GM10248 (cell line): ENCODE measurements at regions of chr3 and their contacts with region 1.

Region 1: DNA sequence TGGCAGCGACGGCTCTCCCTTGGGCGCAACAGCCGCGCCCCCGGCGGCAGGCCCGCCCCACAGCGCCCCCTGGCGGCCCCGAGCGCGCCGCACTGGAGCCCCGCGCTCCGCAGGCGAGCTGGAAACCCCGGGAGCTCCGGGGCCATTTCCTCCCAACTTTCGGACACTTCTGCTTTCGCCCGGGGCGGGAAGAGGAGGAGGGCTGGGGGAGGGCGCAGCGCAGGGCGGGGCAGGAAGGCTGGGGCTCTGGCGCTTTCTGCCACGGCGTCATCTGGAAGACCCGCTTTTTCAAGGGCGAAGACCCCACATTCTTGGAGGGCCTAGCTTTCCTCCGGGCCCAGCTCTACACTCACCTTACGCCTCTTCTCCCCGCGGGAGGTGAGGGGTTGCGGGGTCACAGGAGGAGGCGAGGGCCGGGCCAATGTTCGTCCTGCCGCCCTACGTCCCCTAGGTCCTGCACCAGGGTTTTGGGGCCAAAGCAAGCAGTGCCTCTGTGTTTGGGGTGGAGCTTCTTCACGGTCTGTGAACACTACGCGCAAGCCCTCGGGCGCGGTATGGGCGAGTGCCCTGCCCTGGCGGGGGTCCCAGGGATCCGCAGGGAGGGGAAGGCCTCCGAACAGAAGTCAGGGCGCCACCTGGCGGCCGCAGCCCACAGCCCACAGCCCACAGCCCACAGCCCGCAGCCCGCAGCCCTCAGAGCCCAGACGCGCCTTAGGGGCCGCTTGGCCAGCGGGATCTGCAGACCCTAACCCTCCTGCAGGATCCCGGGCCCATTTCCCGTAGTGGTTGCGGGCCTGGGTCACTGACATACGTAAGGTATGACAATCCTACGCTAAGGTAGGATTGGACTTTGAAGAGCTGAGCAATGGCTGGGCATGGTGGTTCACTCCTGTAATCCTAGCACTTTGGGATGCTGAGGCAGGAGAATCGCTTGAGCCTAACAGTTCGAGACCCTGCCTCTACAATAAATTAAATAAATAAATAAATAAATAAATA is 31.1 kb downstream of the FOXL2 start:
- DNase-seq: peak; percentile 90
- CTCF ChIP-seq: peak; percentile 91

Region 2: DNA sequence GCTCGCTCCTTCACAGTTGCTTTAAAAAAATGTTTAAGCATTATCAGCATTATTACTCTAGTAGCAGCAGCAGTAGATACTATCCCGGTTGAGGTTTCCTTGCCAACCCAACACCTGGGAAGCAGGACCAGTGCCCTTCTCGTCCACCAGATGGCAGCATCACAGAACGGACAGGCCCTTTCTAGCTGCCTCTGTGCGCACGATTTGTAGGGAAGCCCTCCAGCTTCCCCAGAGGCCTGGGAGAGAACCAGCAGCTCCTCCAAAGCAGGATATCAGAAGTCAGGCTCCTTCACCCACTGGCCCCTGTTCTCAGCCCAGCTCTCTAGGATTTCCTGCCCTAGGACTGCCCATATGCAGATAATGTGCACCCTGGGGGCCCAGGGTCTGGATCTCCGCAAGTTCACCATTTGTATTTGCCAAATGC is 498.2 kb before region 1 on chr3:
- CTCF ChIA-PET with region 1: interaction called, 81 read pairs
- POLR2A ChIA-PET with region 1: no interaction called
- DNase-seq: peak; percentile 80
- CTCF ChIP-seq: peak; percentile 91

Region 3: GRCh38 chr3:138625707-138626365 is 290.0 kb before region 1 on chr3:
- CTCF ChIA-PET with region 1: interaction called, 21 read pairs
- POLR2A ChIA-PET with region 1: no interaction called
- DNase-seq: no peak
- CTCF ChIP-seq: no peak

Region 4: DNA sequence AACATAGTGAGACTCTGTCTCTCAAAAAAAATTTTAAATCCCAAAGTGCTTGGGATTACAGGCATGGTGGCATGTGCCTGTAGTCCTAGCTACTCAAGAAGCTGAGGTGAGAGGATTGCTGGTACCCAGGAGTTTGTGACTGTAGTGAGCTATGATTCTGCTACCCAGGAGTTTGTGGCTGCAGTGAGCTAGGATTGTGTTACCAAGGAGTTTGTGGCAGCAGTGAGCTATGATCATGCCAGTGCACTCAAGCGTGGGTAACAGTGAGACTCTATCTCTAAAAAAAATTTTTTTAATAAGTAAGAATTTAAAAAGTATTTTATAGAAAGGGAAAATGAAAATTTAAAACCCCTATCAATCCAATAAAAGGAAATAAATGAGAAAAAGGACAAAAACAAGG is 237.7 kb before region 1 on chr3:
- CTCF ChIA-PET with region 1: interaction called, 15 read pairs
- POLR2A ChIA-PET with region 1: no interaction called
- DNase-seq: no peak
- CTCF ChIP-seq: no peak

Region 5: DNA sequence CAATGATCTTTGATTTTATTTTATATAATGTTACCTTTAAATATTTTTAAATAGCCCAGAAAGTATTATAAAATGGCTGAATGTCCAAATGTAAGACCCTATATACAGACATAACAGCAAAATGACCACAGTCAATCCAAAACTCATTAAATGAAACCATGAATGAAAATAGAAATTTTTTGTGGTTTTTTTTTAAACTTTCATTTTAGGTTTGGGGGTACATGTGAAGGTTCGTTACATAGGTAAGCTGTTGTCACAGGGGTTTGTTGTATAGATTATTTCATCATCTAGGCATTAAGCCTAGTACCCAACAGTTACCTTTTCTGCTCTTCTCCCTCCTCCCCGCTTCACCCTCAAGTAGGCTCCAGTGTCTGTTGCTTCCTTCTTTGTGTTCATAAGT is 198.5 kb before region 1 on chr3:
- CTCF ChIA-PET with region 1: interaction called, 38 read pairs
- POLR2A ChIA-PET with region 1: no interaction called
- DNase-seq: no peak
- CTCF ChIP-seq: no peak

Region 6: GRCh38 chr3:138842483-138843188 is 73.2 kb before region 1 on chr3:
- CTCF ChIA-PET with region 1: interaction called, 15 read pairs
- POLR2A ChIA-PET with region 1: no interaction called
- DNase-seq: peak; percentile 69
- CTCF ChIP-seq: no peak

Region 7: GRCh38 chr3:138935848-138936740 is 20.3 kb after region 1 on chr3:
- CTCF ChIA-PET with region 1: interaction called, 178 read pairs
- POLR2A ChIA-PET with region 1: no interaction called
- DNase-seq: peak; percentile 87
- CTCF ChIP-seq: peak; percentile 92